GM12878 (cell line): ENCODE measurements at regions of chr6 and their contacts with region 1.

Region 1: DNA sequence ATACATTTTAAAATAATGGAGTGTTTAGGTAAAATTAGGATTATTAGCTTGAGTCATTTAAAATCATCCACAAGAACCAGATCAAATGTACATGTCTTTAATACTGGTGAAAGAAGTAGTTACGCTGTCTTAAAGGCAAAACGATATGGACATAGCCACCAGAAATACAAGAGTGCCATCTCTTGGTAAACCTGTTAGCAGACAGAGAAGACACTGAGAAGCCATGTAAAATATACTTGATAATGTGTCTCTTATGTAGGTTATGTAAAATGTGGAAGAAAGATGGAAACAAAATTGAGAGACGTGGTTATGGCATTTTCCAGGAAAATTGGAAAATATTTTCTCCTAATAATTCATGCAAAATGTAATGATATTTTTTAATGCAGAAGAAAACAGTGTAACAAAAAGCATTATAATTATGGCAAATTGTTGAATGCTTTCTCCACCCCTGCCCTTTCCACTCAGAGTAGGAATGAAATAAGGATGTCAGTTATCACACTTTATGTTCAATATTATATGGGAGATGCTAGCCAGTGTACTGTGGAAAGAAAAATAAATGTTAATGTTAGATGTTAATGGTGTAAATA is 12.2 kb upstream of the SLC17A2 start:
- DNase-seq: no peak
- ATAC-seq: peak; percentile 82
- H3K4me3 ChIP-seq: no peak overlapping the region
- H3K27ac ChIP-seq: no peak overlapping the region
- H3K4me1 ChIP-seq: no peaks in the 10 kb centered on the region
- H3K27me3 ChIP-seq: no peaks in the 10 kb centered on the region
- CTCF ChIP-seq: peak; percentile 53 to 82 (median 62); a peak in 5 of 6 replicates
- EP300 ChIP-seq: no peak
- POLR2A ChIP-seq: no peak
- RAD21 ChIP-seq: peak; percentile 86

Region 2: GRCh38 chr6:25223490-25223991 is 719.1 kb before region 1 on chr6:
- CTCF ChIA-PET with region 1: interaction called, 3 read pairs
- POLR2A ChIA-PET with region 1: no interaction called
- RAD21 ChIA-PET with region 1: no interaction called
- SMC1A ChIA-PET with region 1: no interaction called
- in situ Hi-C with region 1: no loop called
- intact Hi-C with region 1: loop called (anchors 2 kb)
- DNase-seq: peak; percentile 19
- ATAC-seq: peak; percentile 81
- H3K4me3 ChIP-seq: no peak overlapping the region; the same call in 1 of the 2 replicates
- H3K27ac ChIP-seq: no peak overlapping the region
- H3K4me1 ChIP-seq: no peaks in the 10 kb centered on the region
- H3K27me3 ChIP-seq: no peaks in the 10 kb centered on the region; a peak in 1 of 4 replicates
- CTCF ChIP-seq: peak; percentile 82 to 90 (median 84)
- EP300 ChIP-seq: 0 out of 4 replicates have a peak, but pooled peaks of 1 of the 2 experiments have one; percentile 11
- POLR2A ChIP-seq: no peak
- RAD21 ChIP-seq: peak; percentile 91

Region 3: GRCh38 chr6:25250878-25251277 is 691.8 kb before region 1 on chr6:
- CTCF ChIA-PET with region 1: interaction called, 3 read pairs
- POLR2A ChIA-PET with region 1: no interaction called
- RAD21 ChIA-PET with region 1: no interaction called
- SMC1A ChIA-PET with region 1: no interaction called
- in situ Hi-C with region 1: loop called (anchors 25 kb)
- intact Hi-C with region 1: no loop called
- DNase-seq: peak; percentile 38
- ATAC-seq: peak; percentile 74
- H3K4me3 ChIP-seq: no peak overlapping the region
- H3K27ac ChIP-seq: no peak overlapping the region
- H3K4me1 ChIP-seq: no peaks in the 10 kb centered on the region
- H3K27me3 ChIP-seq: no peaks in the 10 kb centered on the region
- CTCF ChIP-seq: no peak
- EP300 ChIP-seq: no peak
- POLR2A ChIP-seq: no peak
- RAD21 ChIP-seq: no peak

Region 4: DNA sequence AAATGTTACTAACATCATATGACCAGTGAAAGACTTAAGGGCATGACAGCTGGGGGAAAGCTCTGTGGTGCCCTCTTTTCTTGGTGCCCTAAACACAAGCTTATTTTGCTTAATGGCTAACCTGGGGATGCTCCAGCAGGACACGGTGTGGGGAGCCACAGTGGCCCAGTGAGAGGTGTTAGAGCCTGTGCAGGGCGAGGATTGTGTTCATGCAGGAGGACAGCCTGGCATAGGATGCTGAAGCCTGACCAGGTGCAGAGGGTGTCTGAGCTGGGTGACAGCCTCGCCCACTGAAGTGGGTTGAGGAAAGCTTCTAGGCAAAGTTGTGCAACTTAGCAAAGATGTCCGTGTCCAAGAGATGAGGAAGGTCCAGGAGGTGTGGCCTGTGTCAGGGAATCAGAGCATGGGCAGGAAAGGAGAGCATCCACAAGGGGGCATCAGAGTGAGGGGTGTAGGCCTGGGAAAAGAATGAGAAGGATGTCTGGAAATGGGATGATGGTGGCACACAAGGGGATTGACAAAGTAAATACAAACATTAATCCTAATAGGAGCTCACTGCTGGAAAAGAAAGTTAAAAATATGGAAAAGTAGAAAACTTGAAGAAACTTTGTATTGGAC is 154.2 kb before region 1 on chr6:
- CTCF ChIA-PET with region 1: interaction called, 22 read pairs
- POLR2A ChIA-PET with region 1: no interaction called
- RAD21 ChIA-PET with region 1: interaction called, 3 read pairs
- SMC1A ChIA-PET with region 1: interaction called, 3 read pairs
- in situ Hi-C with region 1: no loop called
- intact Hi-C with region 1: loop called (anchors 5 kb)
- DNase-seq: no peak
- ATAC-seq: peak; percentile 82
- H3K4me3 ChIP-seq: no peak overlapping the region
- H3K27ac ChIP-seq: no peak overlapping the region
- H3K4me1 ChIP-seq: no peaks in the 10 kb centered on the region
- H3K27me3 ChIP-seq: no peaks in the 10 kb centered on the region; a peak in 1 of 4 replicates
- CTCF ChIP-seq: peak; percentile 55 to 69 (median 56); a peak in 5 of 6 replicates
- EP300 ChIP-seq: no peak
- POLR2A ChIP-seq: no peak
- RAD21 ChIP-seq: peak; percentile 58

Region 5: GRCh38 chr6:26017632-26017966 is 74.9 kb after region 1 on chr6:
- CTCF ChIA-PET with region 1: no interaction called
- POLR2A ChIA-PET with region 1: no interaction called
- RAD21 ChIA-PET with region 1: no interaction called
- SMC1A ChIA-PET with region 1: no interaction called
- in situ Hi-C with region 1: no loop called
- intact Hi-C with region 1: no loop called
- DNase-seq: no peak
- ATAC-seq: no peak
- H3K4me3 ChIP-seq: no peak overlapping the region
- H3K27ac ChIP-seq: no peak overlapping the region
- H3K4me1 ChIP-seq: peaks cover 4% of the 10 kb centered on the region; the same call in 1 of the 2 replicates
- H3K27me3 ChIP-seq: no peaks in the 10 kb centered on the region
- CTCF ChIP-seq: peak; percentile 19 to 39 (median 30); a peak in 4 of 6 replicates
- EP300 ChIP-seq: no peak
- POLR2A ChIP-seq: peak; percentile 71
- RAD21 ChIP-seq: no peak